CD8-positive, alpha-beta T cell (primary cell): ENCODE measurements at regions of chr16 and their contacts with region 1.

Region 1: GRCh38 chr16:14300705-14301168 is 229.6 kb downstream of the MRTFB start:
- DNase-seq: peak in 6 of 9 experiments; percentile 27 to 64 (median 40)
- ATAC-seq: peak; percentile 50
- H3K4me3 ChIP-seq: peak overlapping the region in 1 of 2 experiments; percentile 31
- H3K4me3 Mint-ChIP-seq: peak overlapping the region; percentile 86
- H3K27ac ChIP-seq: no peak overlapping the region
- H3K27ac Mint-ChIP-seq: no peak overlapping the region
- H3K4me1 ChIP-seq: peaks cover 16% of the 10 kb centered on the region
- H3K4me1 Mint-ChIP-seq: peaks cover 16% of the 10 kb centered on the region
- H3K27me3 ChIP-seq: peaks cover 0 to 9% of the 10 kb centered on the region in 2 experiments
- H3K27me3 Mint-ChIP-seq: peaks cover 2% of the 10 kb centered on the region
- CTCF ChIP-seq: peak; percentile 28

Region 2: DNA sequence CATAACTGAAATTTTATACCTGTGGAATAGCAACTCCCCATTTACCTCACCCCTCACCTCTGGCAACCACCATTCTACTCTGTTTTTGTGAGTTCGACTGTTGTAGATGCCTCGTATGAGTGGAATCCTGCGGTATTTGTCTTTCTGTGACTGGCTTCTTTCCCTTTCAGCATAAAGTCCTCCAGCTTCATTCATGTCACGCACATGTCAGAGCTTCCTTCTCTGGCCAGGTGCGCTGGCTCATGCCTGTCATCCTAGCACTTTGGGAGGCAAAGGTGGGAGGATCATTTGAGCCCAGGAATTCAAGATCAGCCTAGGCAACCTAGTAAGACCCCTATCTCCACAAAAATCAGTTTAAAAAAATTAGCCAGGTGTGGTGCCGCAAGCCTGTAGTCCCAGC is 50.9 kb after region 1 on chr16:
- CTCF ChIA-PET with region 1: interaction called, 10 read pairs
- POLR2A ChIA-PET with region 1: no interaction called
- intact Hi-C with region 1: no loop called
- DNase-seq: no peak
- ATAC-seq: no peak
- H3K4me3 ChIP-seq: no peak overlapping the region
- H3K4me3 Mint-ChIP-seq: no peak overlapping the region
- H3K27ac ChIP-seq: no peak overlapping the region
- H3K27ac Mint-ChIP-seq: no peak overlapping the region
- H3K4me1 ChIP-seq: no peaks in the 10 kb centered on the region
- H3K4me1 Mint-ChIP-seq: peaks cover 9% of the 10 kb centered on the region
- H3K27me3 ChIP-seq: no peaks in the 10 kb centered on the region
- H3K27me3 Mint-ChIP-seq: peaks cover 2% of the 10 kb centered on the region
- CTCF ChIP-seq: no peak

Region 3: DNA sequence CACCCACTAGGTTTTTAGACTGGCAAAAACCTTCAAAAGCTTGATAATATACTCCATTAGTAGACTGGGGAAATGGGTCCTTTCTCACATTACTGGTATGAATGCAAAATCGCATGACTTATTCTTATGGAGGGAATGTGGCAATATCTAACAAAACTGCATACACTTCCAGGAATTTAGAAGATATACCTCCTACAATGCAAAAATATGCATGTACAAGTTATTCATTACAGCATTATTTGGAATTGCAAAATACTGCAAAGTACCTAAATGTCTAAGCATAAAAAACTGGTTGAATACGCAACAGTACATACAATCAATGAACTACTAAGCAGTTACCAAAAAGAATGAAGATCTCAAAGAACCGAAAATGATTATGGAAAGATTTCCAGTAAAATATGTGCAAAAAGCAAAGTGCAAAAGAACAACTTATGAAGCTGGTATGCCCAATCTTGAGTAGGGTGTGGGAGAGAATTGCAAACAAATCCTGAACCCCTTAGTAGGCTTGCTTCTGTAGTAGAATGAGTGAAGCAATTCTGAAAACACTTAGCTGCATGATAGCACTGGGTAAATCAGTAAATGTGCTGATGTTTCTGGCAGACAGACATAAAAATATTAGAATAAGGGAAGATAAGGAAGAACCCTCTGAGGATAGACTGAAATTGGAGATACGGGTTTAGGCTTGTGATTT is 149.2 kb after region 1 on chr16:
- CTCF ChIA-PET with region 1: no interaction called
- POLR2A ChIA-PET with region 1: no interaction called
- intact Hi-C with region 1: loop called in 1 of 2 experiments (anchors 10 kb)
- DNase-seq: no peak
- ATAC-seq: no peak
- H3K4me3 ChIP-seq: no peak overlapping the region
- H3K4me3 Mint-ChIP-seq: no peak overlapping the region
- H3K27ac ChIP-seq: no peak overlapping the region
- H3K27ac Mint-ChIP-seq: no peak overlapping the region
- H3K4me1 ChIP-seq: no peaks in the 10 kb centered on the region
- H3K4me1 Mint-ChIP-seq: no peaks in the 10 kb centered on the region
- H3K27me3 ChIP-seq: no peaks in the 10 kb centered on the region
- H3K27me3 Mint-ChIP-seq: no peaks in the 10 kb centered on the region
- CTCF ChIP-seq: no peak

Region 4: GRCh38 chr16:14529010-14529669 is 228.4 kb after region 1 on chr16:
- CTCF ChIA-PET with region 1: interaction called, 12 read pairs
- POLR2A ChIA-PET with region 1: no interaction called
- intact Hi-C with region 1: loop called in 1 of 2 experiments (anchors 1 kb)
- DNase-seq: peak; percentile 10 to 72 (median 48)
- ATAC-seq: peak; percentile 40
- H3K4me3 ChIP-seq: no peak overlapping the region
- H3K4me3 Mint-ChIP-seq: no peak overlapping the region
- H3K27ac ChIP-seq: no peak overlapping the region
- H3K27ac Mint-ChIP-seq: no peak overlapping the region
- H3K4me1 ChIP-seq: no peaks in the 10 kb centered on the region
- H3K4me1 Mint-ChIP-seq: no peaks in the 10 kb centered on the region
- H3K27me3 ChIP-seq: no peaks in the 10 kb centered on the region
- H3K27me3 Mint-ChIP-seq: no peaks in the 10 kb centered on the region
- CTCF ChIP-seq: peak; percentile 73

Region 5: DNA sequence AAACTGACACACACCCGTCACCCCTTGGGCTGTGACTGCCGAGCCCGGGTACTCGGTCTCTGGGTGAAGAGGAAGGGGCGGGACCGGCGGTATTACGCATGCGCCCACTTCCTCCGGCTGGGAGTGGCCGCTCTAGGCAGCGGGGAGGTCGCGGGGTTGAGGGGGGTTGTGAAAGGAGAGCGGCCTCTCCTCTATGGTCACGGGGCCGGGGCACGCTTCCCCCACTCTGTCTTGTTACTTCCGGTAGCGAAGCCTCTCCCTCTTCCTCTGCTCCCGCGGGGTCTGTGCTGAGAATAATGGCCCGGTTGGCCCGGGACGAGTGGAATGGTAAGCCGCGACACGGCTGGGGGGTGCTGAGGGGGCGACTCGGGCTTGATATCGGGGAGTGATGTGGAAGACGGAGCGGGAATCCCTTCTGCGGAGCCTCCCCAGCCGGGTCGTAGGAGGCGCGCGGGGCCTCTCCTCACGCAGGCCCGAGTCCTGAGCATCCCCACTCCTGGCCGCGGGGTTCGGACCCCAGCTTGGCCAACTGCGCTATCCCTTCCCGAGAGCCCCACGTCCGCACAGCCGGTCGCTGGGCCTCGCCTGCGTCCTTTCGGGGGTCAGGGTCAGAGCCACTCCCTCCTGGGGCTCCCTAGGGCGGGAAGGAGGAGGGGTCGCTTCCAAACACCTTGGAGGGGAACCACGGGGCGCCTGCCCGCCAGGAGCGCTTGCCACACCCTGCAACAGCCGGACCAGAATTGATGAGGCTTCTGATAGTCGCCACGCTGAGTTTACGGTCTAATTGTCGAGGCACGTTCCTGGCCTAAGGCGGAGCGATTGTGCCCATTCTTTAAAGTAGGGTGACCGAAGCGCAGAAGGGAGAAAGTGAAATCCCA is 332.2 kb after region 1 on chr16 and contains the start of gene BFAR:
- CTCF ChIA-PET with region 1: no interaction called
- POLR2A ChIA-PET with region 1: no interaction called
- intact Hi-C with region 1: loop called in 1 of 2 experiments (anchors 5 kb)
- DNase-seq: peak; percentile 98 to 100 (median 99)
- ATAC-seq: peak; percentile 68
- H3K4me3 ChIP-seq: peak within 1 kb of the TSS; percentile 95 to 100
- H3K4me3 Mint-ChIP-seq: peak within 1 kb of the TSS; percentile 100
- H3K27ac ChIP-seq: peak within 1 kb of the TSS; percentile 82 to 94
- H3K27ac Mint-ChIP-seq: peak within 1 kb of the TSS; percentile 99
- H3K4me1 ChIP-seq: peaks cover 60% of the 10 kb centered on the region
- H3K4me1 Mint-ChIP-seq: peaks cover 73% of the 10 kb centered on the region
- H3K27me3 ChIP-seq: no peaks in the 10 kb centered on the region
- H3K27me3 Mint-ChIP-seq: no peaks in the 10 kb centered on the region
- CTCF ChIP-seq: no peak
- total RNA-seq, gene BFAR: 34.0 to 41.7 TPM